PC-3 (cell line): ENCODE measurements at regions of chr13 and their contacts with region 1.

Region 1: DNA sequence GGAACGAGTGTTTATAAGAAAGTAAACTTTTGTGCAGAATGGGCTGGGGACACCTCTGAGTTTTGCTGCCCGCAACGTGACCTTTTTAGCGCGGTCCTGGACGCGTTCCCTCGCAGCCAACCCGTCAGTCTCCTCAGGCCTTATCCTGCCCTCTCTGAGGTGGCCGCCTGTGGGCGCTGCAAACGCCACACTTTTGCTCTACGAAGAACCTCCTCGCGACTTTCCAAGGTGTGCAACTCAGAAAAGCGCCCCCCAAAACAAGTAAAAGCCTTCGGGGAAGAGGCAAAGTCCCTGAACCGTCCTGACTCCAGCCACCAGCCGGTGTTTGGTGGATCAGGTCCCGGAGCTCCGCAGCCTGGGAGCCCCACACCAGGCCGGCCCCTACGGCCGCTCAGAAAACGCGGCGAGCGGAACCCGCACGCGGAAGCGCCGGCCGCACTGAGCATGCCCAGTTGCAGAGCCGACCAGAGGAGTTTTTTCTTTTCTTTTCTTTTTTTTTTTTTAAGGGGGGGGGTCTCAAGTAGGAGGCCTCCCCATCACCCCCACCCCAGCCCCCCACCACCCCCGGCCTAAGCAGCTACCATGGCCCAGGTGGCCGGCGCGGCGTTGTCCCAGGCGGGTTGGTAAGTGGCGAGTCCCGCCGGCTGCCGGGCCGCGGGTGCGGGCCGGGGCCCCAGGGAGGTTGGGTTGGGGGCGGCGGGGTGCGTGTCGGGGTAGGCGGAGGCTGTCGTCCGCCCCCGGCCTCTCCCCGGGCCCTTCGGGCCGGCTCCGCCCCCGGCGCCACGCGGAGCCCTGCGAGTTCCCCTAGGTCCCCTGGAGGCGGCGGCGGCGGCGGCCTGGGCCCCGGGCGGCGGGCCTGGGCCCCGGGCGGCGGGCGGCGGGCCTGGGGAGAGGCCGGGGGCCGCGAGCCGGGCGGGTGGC is at the start of gene TDRD3:
- DNase-seq: peak; percentile 73
- ATAC-seq: peak; percentile 64
- H3K4me3 ChIP-seq: peak within 1 kb of the TSS; percentile 89
- H3K27ac ChIP-seq: peak within 1 kb of the TSS; percentile 73
- H3K4me1 ChIP-seq: peaks cover 20% of the 10 kb centered on the region
- H3K27me3 ChIP-seq: no peaks in the 10 kb centered on the region
- CTCF ChIP-seq: peak; percentile 69
- total RNA-seq, gene TDRD3: 5.8 and 7.5 TPM in 2 replicates

Region 2: GRCh38 chr13:59946944-59947343 is 450.1 kb before region 1 on chr13:
- CTCF ChIA-PET with region 1: no interaction called
- POLR2A ChIA-PET with region 1: no interaction called
- intact Hi-C with region 1: no loop called
- DNase-seq: no peak
- ATAC-seq: no peak
- H3K4me3 ChIP-seq: no peak overlapping the region
- H3K27ac ChIP-seq: no peak overlapping the region
- H3K4me1 ChIP-seq: no peaks in the 10 kb centered on the region
- H3K27me3 ChIP-seq: no peaks in the 10 kb centered on the region
- CTCF ChIP-seq: no peak

Region 3: DNA sequence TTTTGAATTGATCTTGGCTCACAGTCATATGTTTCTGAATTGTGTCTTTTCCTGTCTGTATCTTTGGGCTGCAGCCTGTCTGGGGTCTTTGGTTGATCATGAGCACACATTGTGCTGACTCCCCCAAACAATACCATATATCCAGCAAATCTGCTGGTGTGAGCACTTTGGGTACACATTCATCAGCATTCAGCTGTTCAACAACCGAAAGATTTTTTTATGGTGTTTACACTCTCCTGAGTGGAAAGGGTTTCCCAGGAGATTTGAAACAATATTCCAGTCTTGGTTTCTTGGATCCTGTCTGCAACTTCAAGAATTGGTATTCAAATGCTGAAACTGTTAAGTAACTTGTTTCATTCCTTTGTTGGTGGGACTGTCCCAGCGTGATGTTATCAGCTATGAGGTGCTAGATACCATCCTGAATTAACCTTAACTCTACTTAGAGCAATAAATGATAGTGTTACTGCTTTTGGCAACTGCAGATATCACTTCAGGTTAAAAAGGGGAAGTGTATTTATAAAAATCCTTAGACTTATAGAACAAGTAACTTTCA is 154.9 kb before region 1 on chr13:
- CTCF ChIA-PET with region 1: interaction called, 11 read pairs
- POLR2A ChIA-PET with region 1: no interaction called
- intact Hi-C with region 1: no loop called
- DNase-seq: no peak
- ATAC-seq: no peak
- H3K4me3 ChIP-seq: no peak overlapping the region
- H3K27ac ChIP-seq: no peak overlapping the region
- H3K4me1 ChIP-seq: no peaks in the 10 kb centered on the region
- H3K27me3 ChIP-seq: peaks cover 28% of the 10 kb centered on the region
- CTCF ChIP-seq: no peak

Region 4: DNA sequence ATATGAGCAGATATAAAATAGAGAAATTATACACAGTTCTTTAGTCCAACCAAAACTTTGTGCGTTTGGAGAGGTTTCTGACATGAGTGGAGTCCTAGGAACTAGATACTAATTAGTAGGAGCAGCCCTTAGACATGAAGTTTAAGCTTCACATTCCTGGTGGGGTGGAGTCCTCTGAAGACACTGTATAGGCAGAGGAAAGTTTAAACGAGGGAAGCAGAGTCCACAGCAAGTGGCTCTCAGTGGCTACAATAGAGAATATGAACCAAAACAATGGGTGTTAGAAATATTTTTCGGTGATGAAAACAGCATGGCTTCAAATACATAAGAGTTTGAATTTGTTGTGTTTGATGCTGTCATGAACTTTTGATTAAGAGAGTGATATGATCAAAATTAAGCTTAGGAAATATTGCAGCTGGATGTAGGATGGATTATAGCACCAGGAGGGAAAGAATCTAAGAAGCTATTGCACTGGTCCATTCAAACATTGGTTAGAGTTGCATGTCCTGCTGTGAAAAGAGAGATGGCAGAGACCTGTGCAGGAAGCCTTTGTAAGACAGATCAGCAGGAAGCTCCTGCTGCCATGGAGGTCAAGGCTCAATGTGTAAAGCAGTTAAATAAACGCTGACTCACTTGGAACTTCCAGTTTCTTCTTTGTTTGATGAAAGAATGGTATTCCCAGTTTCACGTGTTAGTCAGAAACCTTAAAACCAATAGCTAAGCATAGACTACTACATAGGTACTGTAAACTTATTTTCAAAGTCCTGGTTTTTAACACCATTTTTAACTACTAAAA is 175.2 kb after region 1 on chr13:
- CTCF ChIA-PET with region 1: no interaction called
- POLR2A ChIA-PET with region 1: interaction called, 10 read pairs
- intact Hi-C with region 1: no loop called
- DNase-seq: peak; percentile 80
- ATAC-seq: peak; percentile 97
- H3K4me3 ChIP-seq: no peak overlapping the region
- H3K27ac ChIP-seq: peak overlapping the region; percentile 50
- H3K4me1 ChIP-seq: peaks cover 13% of the 10 kb centered on the region
- H3K27me3 ChIP-seq: no peaks in the 10 kb centered on the region
- CTCF ChIP-seq: no peak

Region 5: DNA sequence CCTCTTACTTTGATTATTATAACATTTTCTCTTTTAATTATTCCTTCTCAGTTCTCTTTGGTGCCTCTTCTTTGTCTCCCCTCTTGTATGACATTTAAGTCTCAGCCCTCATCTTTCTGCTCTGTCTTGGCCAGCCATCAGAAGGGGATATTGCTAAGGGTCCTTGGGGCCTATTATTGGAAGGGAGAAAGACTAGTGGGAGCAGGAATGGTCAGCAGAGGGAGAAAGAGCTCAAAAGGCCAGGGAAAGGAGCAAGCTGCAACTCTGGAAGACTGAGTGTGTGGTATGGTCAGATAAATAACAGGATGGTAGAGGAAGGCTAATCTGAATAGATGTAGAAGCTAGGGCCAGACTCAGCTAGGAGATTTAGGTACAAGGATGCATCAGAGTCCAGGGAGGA is 336.9 kb after region 1 on chr13:
- CTCF ChIA-PET with region 1: no interaction called
- POLR2A ChIA-PET with region 1: no interaction called
- intact Hi-C with region 1: no loop called
- DNase-seq: no peak
- ATAC-seq: no peak
- H3K4me3 ChIP-seq: no peak overlapping the region
- H3K27ac ChIP-seq: no peak overlapping the region
- H3K4me1 ChIP-seq: no peaks in the 10 kb centered on the region
- H3K27me3 ChIP-seq: no peaks in the 10 kb centered on the region
- CTCF ChIP-seq: no peak